ENCODE measurements at regions of chr16 and their contacts with region 1.

Region 1: DNA sequence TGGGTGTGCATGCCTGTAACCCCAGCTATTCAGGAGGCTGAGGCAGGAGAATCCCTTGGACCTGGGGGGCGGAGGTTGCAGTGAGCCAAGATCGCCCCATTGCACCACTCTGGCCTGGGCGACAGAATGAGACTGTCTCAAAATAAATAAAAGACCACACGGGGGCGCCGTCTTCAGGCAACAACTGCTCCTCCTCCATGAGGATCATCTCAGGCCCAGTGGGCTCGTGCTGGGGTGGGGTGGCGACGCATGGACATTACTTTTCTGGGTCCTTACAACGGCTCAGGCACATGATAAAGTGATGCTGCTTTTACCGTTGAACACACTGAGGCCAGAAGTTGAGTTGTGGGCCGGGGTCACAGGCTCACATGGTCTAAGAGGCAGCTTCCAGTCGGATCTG is 56.2 kb downstream of the PRMT7 start:
- DNase-seq: peak; percentile 62
- CTCF ChIP-seq: peak; percentile 49

Region 2: GRCh38 chr16:68013440-68013839 is 353.6 kb before region 1 on chr16:
- CTCF ChIA-PET with region 1: no interaction called
- POLR2A ChIA-PET with region 1: no interaction called
- DNase-seq: no peak
- CTCF ChIP-seq: no peak

Region 3: DNA sequence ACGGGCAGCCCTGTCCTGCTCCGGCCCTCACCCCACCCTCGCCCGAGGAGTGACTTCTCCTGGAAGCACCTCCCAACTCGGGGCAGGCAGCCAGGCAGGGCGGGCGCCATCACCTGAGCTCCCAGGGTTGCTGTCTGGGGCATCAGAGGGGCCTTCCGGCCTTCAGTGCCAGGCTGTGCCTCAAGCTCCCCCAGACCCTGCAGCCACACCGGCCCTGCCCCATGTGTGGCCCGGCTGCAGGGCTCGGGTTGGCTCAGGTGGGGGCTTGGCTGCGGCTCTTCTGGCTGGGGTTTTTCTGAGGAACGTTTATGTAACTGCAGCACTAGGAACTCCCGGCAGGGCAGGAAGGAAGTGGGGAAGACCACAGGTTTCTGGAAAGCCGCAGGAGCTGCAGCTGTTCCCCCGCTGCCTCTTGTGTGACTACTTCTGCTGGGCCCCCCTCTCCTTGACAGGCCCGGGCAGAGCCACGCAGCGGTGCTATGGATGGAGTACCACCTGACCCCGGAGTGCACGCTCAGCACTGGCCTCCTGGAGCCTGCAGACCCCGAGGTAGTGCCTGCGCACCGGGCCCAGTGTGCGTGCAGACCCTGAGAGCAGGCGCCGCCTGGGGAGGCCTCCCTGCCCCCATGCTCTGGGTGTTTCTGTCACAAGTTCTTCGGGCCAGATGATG is 10.6 kb before region 1 on chr16:
- CTCF ChIA-PET with region 1: interaction called, 64 read pairs
- POLR2A ChIA-PET with region 1: no interaction called
- DNase-seq: peak; percentile 87
- CTCF ChIP-seq: no peak

Region 4: DNA sequence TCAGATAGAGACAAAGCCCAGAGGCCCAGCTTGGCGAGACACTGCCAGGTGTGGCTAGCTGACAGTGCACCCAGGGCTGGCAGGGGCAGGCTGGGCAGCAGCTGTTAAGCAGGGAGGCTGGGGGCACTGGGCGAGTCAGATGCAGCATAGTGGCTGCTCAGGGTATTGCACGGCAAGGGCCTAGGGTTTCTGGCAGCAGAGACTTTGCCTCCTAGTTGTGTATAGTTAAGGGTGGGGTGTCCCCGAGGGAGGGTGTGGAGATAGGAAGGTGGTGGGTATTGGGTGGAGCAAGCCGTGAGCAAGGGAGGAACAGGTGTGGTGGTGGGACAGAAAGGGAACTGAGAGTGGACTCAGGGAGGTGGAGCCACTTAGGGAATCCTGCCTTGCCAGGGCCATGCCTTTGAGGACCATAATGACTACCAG is 15.3 kb after region 1 on chr16:
- CTCF ChIA-PET with region 1: interaction called, 10 read pairs
- POLR2A ChIA-PET with region 1: no interaction called
- DNase-seq: peak; percentile 65
- CTCF ChIP-seq: no peak